MCF 10A (cell line): ENCODE measurements at regions of chr3 and their contacts with region 1.

Region 1: DNA sequence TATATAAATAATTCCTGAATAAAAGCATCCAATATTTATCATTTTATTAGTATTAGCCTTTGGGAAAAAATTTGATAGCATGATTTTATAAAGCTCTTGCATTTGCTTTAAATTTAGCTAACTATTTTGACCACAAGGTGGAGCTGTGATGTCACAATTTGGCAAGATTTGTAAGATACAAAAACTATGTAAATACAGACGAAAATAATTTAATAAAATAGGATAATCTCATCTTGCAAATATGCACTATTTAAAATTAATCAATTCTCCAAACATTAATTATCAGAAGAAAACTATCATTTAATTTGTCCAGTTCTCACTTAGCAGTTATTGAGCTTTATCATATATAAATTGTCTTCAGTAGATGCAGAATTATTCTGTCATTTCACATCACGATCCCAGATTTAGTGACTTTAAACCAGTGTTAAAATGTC is 95.4 kb downstream of the PLOD2 start:
- DNase-seq: peak; percentile 69
- H3K4me3 Mint-ChIP-seq: no peak overlapping the region
- H3K27ac Mint-ChIP-seq: no peak overlapping the region
- H3K4me1 Mint-ChIP-seq: peaks cover 9% of the 10 kb centered on the region
- H3K27me3 Mint-ChIP-seq: no peaks in the 10 kb centered on the region
- CTCF ChIP-seq: peak; percentile 72

Region 2: DNA sequence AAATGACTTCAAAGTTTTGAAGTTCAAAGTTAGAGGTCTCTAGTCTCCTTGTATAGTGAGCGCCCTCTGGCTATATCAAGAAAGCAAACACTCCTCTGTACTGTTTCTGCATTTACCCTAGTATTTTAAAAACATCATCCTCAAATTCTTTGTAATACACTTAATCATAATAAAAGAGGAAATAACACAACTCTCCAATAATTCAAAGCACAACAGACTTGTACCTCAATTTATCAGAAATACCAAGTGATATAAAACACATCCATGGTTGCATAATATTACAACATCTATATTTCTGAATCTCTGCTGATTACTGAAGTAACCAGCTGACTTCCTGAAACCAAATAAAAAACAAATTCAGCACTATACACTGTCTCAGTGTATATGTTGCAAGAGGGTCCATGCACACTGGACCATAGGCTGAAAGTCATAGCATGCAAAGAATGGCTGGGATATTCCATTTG is 82.9 kb after region 1 on chr3:
- CTCF ChIA-PET with region 1: interaction called, 12 read pairs
- POLR2A ChIA-PET with region 1: no interaction called
- intact Hi-C with region 1: no loop called
- DNase-seq: peak; percentile 47
- H3K4me3 Mint-ChIP-seq: no peak overlapping the region
- H3K27ac Mint-ChIP-seq: peak overlapping the region; percentile 47
- H3K4me1 Mint-ChIP-seq: peaks cover 48% of the 10 kb centered on the region
- H3K27me3 Mint-ChIP-seq: no peaks in the 10 kb centered on the region
- CTCF ChIP-seq: no peak

Region 3: DNA sequence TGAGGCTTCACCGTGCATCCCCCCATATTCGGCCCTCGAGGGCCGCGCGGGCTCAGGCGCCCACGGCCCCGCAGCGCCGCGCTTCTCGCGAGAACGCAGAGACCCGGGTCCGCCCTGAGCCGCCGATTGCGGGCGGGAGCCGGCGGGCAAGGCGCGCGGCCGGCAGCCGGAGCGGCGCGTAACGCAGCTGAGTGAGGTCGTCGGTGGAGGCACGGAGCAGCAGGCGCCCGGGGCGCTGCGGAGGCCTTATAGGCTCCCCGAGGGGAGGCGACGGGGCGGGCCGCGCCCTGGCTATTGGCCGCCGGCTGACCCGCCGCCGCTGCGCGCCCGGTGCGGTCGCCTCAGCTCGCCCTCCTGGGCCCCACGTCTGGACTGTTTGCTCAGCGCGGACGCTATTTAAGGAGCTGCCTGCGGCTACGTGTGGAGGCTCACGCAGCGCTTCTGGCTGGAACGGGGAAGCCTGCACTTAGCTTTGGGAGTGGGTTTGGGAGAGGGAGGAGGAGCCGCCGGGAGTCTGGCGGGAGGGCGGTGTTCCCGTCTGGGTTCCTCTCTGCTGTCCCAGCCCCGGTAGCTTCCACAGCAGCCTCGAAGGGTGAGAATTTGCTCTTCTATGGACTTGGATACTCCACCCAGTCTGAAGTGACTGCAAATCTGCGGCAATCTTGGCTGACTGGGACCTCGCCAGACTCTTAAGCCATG is 95.5 kb after region 1 on chr3 and contains the start of gene PLOD2:
- CTCF ChIA-PET with region 1: interaction called, 27 read pairs
- POLR2A ChIA-PET with region 1: interaction called, 15 read pairs
- intact Hi-C with region 1: loop called (anchors 1 kb)
- DNase-seq: peak; percentile 75
- H3K4me3 Mint-ChIP-seq: peak within 1 kb of the TSS; percentile 86
- H3K27ac Mint-ChIP-seq: peak within 1 kb of the TSS; percentile 86
- H3K4me1 Mint-ChIP-seq: peaks cover 44% of the 10 kb centered on the region
- H3K27me3 Mint-ChIP-seq: no peaks in the 10 kb centered on the region
- CTCF ChIP-seq: no peak
- total RNA-seq, gene PLOD2: 109 and 149 TPM in 2 replicates

Region 4: GRCh38 chr3:146184616-146185015 is 119.0 kb after region 1 on chr3:
- CTCF ChIA-PET with region 1: interaction called, 207 read pairs
- POLR2A ChIA-PET with region 1: interaction called, 16 read pairs
- intact Hi-C with region 1: loop called (anchors 1 kb)
- DNase-seq: peak; percentile 86
- H3K4me3 Mint-ChIP-seq: no peak overlapping the region
- H3K27ac Mint-ChIP-seq: no peak overlapping the region
- H3K4me1 Mint-ChIP-seq: peaks cover 33% of the 10 kb centered on the region
- H3K27me3 Mint-ChIP-seq: no peaks in the 10 kb centered on the region
- CTCF ChIP-seq: no peak

Region 5: DNA sequence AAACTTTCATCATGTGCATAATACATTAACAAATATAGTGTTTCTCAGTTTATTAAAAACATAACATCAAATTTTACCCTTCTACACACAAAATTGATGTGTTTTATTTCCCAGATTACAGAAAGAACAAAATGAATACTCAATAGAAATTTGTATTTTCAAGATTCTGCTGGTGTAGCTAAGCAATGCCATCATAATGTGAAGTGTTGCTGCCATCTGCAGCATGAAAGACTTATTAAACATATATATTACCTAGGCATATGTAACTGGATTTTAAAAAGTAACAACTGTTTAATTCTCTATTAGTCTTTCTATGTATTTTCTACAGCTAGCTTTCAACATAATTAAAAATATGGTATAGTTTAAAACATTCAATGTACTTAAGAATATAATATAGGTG is 512.1 kb after region 1 on chr3:
- CTCF ChIA-PET with region 1: interaction called, 4 read pairs
- POLR2A ChIA-PET with region 1: interaction called, 3 read pairs
- intact Hi-C with region 1: loop called (anchors 5 kb)
- DNase-seq: peak; percentile 60
- H3K4me3 Mint-ChIP-seq: no peak overlapping the region
- H3K27ac Mint-ChIP-seq: no peak overlapping the region
- H3K4me1 Mint-ChIP-seq: peaks cover 15% of the 10 kb centered on the region
- H3K27me3 Mint-ChIP-seq: no peaks in the 10 kb centered on the region
- CTCF ChIP-seq: peak; percentile 49

Region 6: GRCh38 chr3:146732325-146732724 is 666.7 kb after region 1 on chr3:
- CTCF ChIA-PET with region 1: no interaction called
- POLR2A ChIA-PET with region 1: no interaction called
- intact Hi-C with region 1: no loop called
- DNase-seq: no peak
- H3K4me3 Mint-ChIP-seq: no peak overlapping the region
- H3K27ac Mint-ChIP-seq: no peak overlapping the region
- H3K4me1 Mint-ChIP-seq: no peaks in the 10 kb centered on the region
- H3K27me3 Mint-ChIP-seq: peaks cover 14% of the 10 kb centered on the region
- CTCF ChIP-seq: no peak

Region 7: GRCh38 chr3:146968204-146968651 is 902.6 kb after region 1 on chr3:
- CTCF ChIA-PET with region 1: no interaction called
- POLR2A ChIA-PET with region 1: no interaction called
- intact Hi-C with region 1: no loop called
- DNase-seq: peak; percentile 21
- H3K4me3 Mint-ChIP-seq: no peak overlapping the region
- H3K27ac Mint-ChIP-seq: peak overlapping the region; percentile 71
- H3K4me1 Mint-ChIP-seq: peaks cover 20% of the 10 kb centered on the region
- H3K27me3 Mint-ChIP-seq: peaks cover 10% of the 10 kb centered on the region
- CTCF ChIP-seq: no peak